IMR-90 (cell line): ENCODE measurements at regions of chr2 and their contacts with region 1.

Region 1: GRCh38 chr2:173402405-173402974 is 47.8 kb downstream of the CDCA7 start:
- DNase-seq: peak; percentile 79
- ATAC-seq: peak; percentile 99
- H3K4me3 ChIP-seq: no peak overlapping the region
- H3K27ac ChIP-seq: no peak overlapping the region
- H3K4me1 ChIP-seq: no peaks in the 10 kb centered on the region
- H3K27me3 ChIP-seq: peaks cover 53% of the 10 kb centered on the region
- CTCF ChIP-seq: peak; percentile 96
- POLR2A ChIP-seq: no peak
- RAD21 ChIP-seq: peak; percentile 96

Region 2: DNA sequence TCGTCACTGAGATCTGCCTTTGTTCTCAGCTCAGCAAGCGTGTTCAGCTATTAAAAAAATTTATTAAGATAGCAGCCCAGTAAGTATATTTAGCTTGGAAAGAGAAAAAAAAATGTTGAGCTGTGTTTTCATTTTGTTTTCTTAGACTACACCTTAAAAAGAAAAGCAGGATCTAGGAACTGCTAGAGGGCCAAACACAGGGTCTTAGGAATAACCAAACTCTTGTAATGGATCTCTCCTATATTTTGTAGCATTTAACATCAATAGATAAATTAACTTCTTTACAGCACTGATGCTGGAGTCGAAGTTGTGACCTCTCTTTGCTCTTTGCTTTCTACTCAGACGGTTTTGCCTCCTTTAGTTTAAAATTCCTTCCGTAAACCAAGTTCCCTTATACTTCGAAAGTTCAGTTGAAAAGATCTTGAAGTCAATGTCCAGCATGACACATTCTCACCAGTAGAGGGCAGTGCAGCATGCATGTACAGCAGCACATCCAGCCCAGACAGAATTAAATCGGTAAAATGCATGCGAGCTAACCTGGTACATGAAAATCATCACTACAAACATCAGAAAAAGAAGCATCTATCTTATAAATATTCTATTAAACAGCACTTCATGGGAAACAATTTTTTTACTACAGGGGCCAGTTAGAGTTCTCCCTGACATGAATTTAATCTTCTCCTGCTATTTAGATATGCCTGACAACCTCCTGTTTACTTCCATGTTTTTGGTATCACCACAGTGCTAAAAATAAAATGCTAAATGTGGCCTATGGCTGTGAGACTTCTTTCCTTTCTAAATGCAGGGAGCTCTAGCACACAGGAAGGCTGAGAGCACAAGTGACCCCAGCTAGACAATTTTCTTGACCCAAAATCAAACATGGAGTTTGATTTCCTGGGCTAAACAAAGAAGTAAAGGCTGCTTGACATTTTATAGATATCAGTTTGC is 375.0 kb before region 1 on chr2:
- CTCF ChIA-PET with region 1: interaction called, 3 read pairs
- POLR2A ChIA-PET with region 1: no interaction called
- dilution Hi-C with region 1: no loop called
- in situ Hi-C with region 1: no loop called
- intact Hi-C with region 1: loop called (anchors 5 kb)
- DNase-seq: peak; percentile 93
- ATAC-seq: peak; percentile 77
- H3K4me3 ChIP-seq: no peak overlapping the region
- H3K27ac ChIP-seq: peak overlapping the region; percentile 99; the same call in 1 of the 2 replicates
- H3K4me1 ChIP-seq: peaks cover 9% of the 10 kb centered on the region
- H3K27me3 ChIP-seq: no peaks in the 10 kb centered on the region
- CTCF ChIP-seq: peak; percentile 96
- POLR2A ChIP-seq: peak; percentile 51; the same call in 1 of the 2 replicates
- RAD21 ChIP-seq: peak; percentile 98

Region 3: DNA sequence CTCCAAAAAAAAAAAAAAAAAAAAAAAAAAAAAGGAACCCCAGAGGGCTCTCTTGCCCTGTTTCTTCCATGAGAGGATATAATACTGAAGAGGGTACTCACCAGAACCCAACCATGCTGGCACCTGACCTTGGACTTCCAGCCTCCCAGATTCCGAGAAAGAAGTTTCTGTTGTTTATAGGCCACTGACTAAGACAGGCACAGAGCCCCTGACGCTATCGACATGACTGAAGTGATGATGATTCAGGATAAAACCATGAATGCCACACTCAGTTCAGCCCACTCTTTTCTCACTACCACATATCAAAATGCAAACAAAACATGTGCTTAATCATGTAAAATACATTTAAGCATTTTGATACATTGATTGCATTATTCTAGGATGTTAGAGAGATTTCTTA is 113.9 kb before region 1 on chr2:
- CTCF ChIA-PET with region 1: no interaction called
- POLR2A ChIA-PET with region 1: no interaction called
- dilution Hi-C with region 1: no loop called
- in situ Hi-C with region 1: no loop called
- intact Hi-C with region 1: no loop called
- DNase-seq: peak; percentile 77
- ATAC-seq: peak; percentile 57
- H3K4me3 ChIP-seq: no peak overlapping the region
- H3K27ac ChIP-seq: no peak overlapping the region
- H3K4me1 ChIP-seq: no peaks in the 10 kb centered on the region; the same call in 1 of the 2 replicates
- H3K27me3 ChIP-seq: peaks cover 2% of the 10 kb centered on the region; the same call in 1 of the 2 replicates
- CTCF ChIP-seq: no peak
- POLR2A ChIP-seq: no peak
- RAD21 ChIP-seq: no peak

Region 4: DNA sequence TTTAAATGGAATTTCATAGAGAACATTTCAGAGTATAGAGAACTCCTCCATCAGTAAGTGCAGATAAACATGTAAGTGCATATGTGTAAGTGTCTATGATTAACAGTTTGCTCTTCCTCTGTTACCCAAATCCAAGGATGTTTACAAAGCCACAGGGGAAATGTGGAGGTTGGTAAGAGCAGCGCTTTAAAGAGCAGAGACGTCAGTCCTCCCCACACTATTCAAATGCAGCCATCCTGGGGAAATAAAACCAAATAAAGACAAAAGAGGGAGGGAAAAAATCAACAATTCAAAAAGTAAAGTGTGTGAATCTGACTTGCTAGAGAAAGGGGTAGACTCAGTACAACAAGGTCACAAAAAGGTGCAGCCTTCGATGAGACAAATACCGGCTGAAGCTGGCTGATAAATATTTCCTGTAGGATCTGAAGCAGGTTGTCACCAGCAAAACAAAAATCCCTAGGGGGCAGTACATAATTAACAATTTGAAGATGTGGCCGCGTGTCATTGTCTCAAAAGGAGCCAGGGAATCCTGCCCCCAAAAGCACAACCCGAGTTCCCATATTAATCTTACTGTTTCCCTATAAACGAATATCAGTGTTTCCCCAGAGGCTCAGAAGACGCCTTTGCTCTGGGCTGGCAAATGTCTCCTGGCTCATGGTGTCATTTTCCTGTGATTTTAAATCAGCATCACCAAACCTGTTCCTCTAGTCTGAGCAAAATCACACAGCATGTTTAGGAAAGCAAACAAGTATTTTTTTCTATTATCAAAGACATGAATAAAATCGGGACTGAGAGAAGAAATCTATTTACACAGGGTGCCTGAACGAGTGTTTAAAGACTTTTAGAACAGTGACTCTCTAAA is 168.8 kb after region 1 on chr2:
- CTCF ChIA-PET with region 1: interaction called, 8 read pairs
- POLR2A ChIA-PET with region 1: no interaction called
- dilution Hi-C with region 1: no loop called
- in situ Hi-C with region 1: no loop called
- intact Hi-C with region 1: loop called (anchors 2 kb)
- DNase-seq: peak; percentile 39
- ATAC-seq: peak; percentile 53; the same call in 1 of the 2 replicates
- H3K4me3 ChIP-seq: no peak overlapping the region
- H3K27ac ChIP-seq: no peak overlapping the region
- H3K4me1 ChIP-seq: no peaks in the 10 kb centered on the region
- H3K27me3 ChIP-seq: peaks cover 5% of the 10 kb centered on the region
- CTCF ChIP-seq: peak; percentile 45
- POLR2A ChIP-seq: no peak
- RAD21 ChIP-seq: peak; percentile 59

Region 5: DNA sequence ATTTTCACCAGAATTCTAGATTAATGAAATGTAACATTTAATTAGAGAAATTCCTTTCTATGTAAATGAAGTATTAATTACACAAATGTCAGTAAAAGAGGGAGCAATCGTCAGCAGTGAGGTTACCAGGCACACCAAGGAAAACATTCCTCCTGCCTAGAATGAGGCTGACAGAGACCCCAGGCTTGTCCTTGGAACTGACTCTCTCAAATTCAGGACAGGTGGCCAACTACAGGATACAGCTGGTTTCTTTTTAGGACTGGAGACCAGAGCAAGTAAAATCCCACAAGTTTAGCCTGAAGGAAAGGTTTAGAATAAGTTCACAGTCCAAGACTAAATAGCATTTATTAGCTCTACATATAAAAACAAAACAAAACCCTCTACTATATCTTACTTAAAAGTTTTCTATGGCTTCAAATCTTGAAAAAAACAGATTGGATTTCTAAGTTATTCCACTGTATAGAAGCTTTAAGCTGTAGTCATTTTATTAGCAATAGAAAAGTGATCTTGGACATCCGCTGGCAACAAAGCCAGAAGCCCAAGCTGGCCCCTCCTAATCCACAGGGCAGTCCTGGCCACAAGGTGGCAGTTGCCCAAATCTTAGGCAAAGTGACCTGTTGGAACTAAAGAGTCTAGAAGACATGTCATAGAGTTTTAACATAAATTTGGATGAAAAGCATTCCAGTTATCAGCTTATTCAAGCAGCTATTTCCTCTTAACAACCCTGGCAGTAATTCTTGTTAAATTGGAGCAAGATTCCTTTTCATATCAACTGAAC is 481.7 kb after region 1 on chr2:
- CTCF ChIA-PET with region 1: no interaction called
- POLR2A ChIA-PET with region 1: no interaction called
- dilution Hi-C with region 1: no loop called
- in situ Hi-C with region 1: no loop called
- intact Hi-C with region 1: loop called (anchors 10 kb)
- DNase-seq: peak; percentile 32
- ATAC-seq: peak; percentile 59; the same call in 1 of the 2 replicates
- H3K4me3 ChIP-seq: no peak overlapping the region
- H3K27ac ChIP-seq: no peak overlapping the region
- H3K4me1 ChIP-seq: no peaks in the 10 kb centered on the region
- H3K27me3 ChIP-seq: peaks cover 12% of the 10 kb centered on the region
- CTCF ChIP-seq: peak; percentile 53
- POLR2A ChIP-seq: no peak
- RAD21 ChIP-seq: peak; percentile 54

Region 6: GRCh38 chr2:174039551-174040416 is 637.3 kb after region 1 on chr2:
- CTCF ChIA-PET with region 1: no interaction called
- POLR2A ChIA-PET with region 1: no interaction called
- dilution Hi-C with region 1: no loop called
- in situ Hi-C with region 1: no loop called
- intact Hi-C with region 1: loop called (anchors 1 kb)
- DNase-seq: peak; percentile 97
- ATAC-seq: peak; percentile 94
- H3K4me3 ChIP-seq: no peak overlapping the region
- H3K27ac ChIP-seq: peak overlapping the region; percentile 82
- H3K4me1 ChIP-seq: peaks cover 6% of the 10 kb centered on the region
- H3K27me3 ChIP-seq: no peaks in the 10 kb centered on the region
- CTCF ChIP-seq: peak; percentile 93
- POLR2A ChIP-seq: no peak
- RAD21 ChIP-seq: peak; percentile 91

Region 7: DNA sequence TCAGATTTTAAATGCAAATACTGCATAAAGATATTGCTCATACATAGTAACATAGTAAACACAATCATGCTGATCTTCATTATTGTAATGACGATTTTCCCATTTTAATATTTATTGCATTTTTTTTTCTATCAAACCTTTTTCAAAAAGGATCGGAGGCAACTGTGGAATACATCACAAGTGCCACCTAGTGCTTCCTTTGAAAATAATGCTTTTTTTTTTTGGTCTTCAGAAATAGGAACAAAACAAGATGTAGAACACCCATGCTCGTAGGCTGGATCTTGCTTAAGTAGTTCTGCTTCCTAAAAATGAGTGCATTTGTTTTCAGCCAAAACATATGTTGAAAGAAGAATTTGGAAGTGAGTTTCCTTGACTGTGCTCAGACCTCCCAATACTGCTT is 1120.1 kb after region 1 on chr2:
- CTCF ChIA-PET with region 1: no interaction called
- POLR2A ChIA-PET with region 1: no interaction called
- dilution Hi-C with region 1: no loop called
- in situ Hi-C with region 1: no loop called
- intact Hi-C with region 1: loop called (anchors 10 kb)
- DNase-seq: peak; percentile 11
- ATAC-seq: no peak
- H3K4me3 ChIP-seq: no peak overlapping the region
- H3K27ac ChIP-seq: no peak overlapping the region
- H3K4me1 ChIP-seq: no peaks in the 10 kb centered on the region
- H3K27me3 ChIP-seq: peaks cover 21% of the 10 kb centered on the region
- CTCF ChIP-seq: peak; percentile 47
- POLR2A ChIP-seq: no peak
- RAD21 ChIP-seq: peak; percentile 51